Mammary epithelial cell (primary cell): ENCODE measurements at regions of chr11 and their contacts with region 1.

Region 1: DNA sequence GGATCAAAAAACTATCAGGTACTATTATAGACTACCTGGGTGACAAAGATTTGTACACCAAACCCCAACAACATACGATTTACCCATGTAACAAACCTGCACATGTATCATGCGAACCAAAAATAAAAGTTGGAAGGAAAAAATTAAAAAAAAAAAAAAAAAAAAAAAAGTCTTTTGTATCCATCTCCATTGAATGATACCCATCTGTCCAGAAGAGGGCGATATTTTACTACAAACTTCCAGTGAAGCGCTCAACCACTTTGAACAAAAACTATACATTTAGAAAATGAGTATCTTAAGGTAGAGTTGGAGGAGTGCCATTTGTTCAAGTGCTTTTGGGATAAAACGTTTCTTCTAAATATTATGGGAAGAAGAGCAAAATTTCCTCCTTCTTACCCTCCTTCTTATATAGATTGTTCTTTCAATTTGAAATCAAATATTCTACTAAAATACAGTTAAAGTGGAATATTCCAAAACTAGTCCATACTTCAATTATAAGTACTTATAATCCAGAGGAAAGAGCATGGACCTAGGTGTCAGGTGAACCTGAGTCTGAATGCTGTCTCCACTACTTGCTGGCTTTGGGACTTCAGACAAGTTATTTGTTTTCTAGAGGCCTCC is 23.3 kb downstream of the ARL14EP start:
- DNase-seq: peak; percentile 25
- H3K4me3 ChIP-seq: no peak overlapping the region
- H3K27ac ChIP-seq: no peak overlapping the region
- H3K4me1 ChIP-seq: no peaks in the 10 kb centered on the region
- H3K27me3 ChIP-seq: no peaks in the 10 kb centered on the region
- CTCF ChIP-seq: peak; percentile 57 to 59

Region 2: DNA sequence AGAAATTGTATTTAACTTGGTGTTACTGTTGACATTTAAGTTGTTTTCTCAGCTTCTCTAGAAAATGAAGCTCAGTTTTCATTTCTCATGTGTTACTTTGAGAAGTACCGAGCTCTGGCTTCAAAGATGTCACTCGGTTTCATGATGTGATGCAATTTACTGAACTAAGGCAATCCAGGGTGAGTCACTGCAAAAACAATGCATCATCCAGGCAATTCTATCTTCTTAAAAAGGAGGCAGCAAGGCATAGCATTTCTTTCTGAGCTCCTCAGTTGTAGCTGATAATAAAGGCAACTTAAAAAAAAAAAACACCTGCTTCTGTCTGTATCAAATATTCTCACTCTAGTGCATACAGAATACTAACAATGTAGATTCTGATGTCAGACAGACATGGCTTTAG is 238.3 kb before region 1 on chr11:
- CTCF ChIA-PET with region 1: no interaction called
- dilution Hi-C with region 1: no loop called
- in situ Hi-C with region 1: no loop called
- intact Hi-C with region 1: no loop called
- DNase-seq: peak; percentile 48
- H3K4me3 ChIP-seq: no peak overlapping the region
- H3K27ac ChIP-seq: no peak overlapping the region
- H3K4me1 ChIP-seq: no peaks in the 10 kb centered on the region
- H3K27me3 ChIP-seq: no peaks in the 10 kb centered on the region
- CTCF ChIP-seq: no peak

Region 3: GRCh38 chr11:30653606-30654005 is 307.4 kb after region 1 on chr11:
- CTCF ChIA-PET with region 1: no interaction called
- dilution Hi-C with region 1: no loop called
- in situ Hi-C with region 1: no loop called
- intact Hi-C with region 1: loop called (anchors 10 kb)
- DNase-seq: no peak
- H3K4me3 ChIP-seq: no peak overlapping the region
- H3K27ac ChIP-seq: no peak overlapping the region
- H3K4me1 ChIP-seq: no peaks in the 10 kb centered on the region
- H3K27me3 ChIP-seq: no peaks in the 10 kb centered on the region
- CTCF ChIP-seq: peak in 1 of 2 donors; percentile 4

Region 4: DNA sequence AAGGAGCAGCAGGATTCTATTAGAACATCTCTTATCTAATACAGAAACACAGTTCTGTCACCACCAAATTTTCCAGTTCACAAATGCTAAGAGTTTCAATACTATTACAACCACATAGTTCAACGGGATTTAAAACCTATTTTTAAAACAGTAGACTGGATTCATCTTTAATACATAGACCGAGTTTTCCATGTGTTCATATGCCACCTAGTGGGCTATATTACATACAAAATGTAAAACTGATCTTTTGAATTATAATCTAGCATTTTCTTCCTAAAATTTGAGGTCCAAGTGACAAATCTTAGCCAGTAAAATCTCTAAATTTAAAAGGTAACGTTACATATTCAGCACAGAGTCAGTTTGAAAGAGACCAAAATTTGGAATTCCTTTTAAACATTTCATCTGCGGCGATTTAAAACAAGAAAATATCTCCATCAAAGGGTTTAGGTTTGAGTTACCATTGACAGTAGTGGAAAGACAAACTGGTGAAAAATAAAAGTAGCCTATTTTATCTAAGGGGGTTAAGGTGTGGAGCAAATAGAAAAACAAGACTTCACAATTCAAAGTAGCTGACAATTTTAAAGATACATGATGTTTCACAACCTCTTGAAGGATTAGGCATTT is 509.3 kb after region 1 on chr11:
- CTCF ChIA-PET with region 1: no interaction called
- dilution Hi-C with region 1: no loop called
- in situ Hi-C with region 1: no loop called
- intact Hi-C with region 1: loop called (anchors 1 kb)
- DNase-seq: no peak
- H3K4me3 ChIP-seq: no peak overlapping the region
- H3K27ac ChIP-seq: no peak overlapping the region
- H3K4me1 ChIP-seq: no peaks in the 10 kb centered on the region
- H3K27me3 ChIP-seq: no peaks in the 10 kb centered on the region
- CTCF ChIP-seq: peak in 1 of 2 donors; percentile 34